ENCODE measurements at regions of chr12 and their contacts with region 1.

Region 1: DNA sequence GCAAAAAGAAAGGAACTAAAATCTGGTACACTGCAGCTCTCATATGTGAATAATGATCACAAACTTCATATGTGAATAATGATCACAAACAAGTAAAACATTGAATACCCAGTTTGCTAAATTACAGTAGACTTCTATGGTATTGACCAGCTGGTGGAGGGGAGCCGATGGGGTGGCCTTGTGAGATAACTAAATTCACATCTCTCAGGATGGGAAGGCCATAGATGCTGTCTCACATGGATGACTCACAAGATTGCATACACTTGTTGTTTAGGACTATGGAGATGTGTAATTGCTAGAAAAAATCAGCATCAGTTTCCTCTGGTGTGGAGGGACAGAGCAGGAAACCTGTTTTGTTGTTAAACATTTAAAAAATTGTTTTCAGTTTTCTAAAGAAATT is 49.2 kb downstream of the ACACB start:
- DNase-seq: peak in 6 of 7 donors; percentile 46 to 67 (median 59)
- H3K4me3 ChIP-seq: no peak overlapping the region
- H3K27ac ChIP-seq: peak overlapping the region in 3 of 5 donors; percentile 42 to 59 (median 46)
- H3K4me1 ChIP-seq: peaks cover 8 to 35% of the 10 kb centered on the region in 2 donors
- H3K27me3 ChIP-seq: no peaks in the 10 kb centered on the region
- CTCF ChIP-seq: no peak
- POLR2A ChIP-seq: no peak

Region 2: DNA sequence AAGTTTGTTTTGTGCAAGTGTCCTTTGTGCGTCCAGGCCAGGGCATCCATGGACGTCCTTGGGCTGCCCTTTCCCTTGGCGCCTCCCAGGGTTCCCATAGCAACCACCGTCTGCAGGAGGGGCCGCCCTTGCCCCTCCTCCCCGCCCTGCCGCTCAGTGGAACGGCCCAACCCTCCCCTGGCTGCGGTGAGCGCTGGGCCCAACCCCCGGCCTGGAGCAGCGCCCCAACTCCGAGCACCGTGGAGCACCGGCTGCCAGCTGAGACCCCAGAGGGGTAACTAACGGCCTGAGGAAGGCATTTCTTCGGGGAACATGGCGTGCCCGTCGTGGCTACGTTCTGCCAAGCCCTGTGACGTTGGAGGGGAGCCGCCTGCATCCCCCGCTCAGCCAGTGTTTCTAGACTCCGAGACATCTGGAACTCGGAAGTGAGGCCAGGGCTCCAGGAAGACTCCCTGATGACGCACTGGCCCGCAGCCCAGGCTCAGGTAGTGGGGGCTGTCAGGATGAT is 54.6 kb before region 1 on chr12:
- intact Hi-C with region 1: loop called in 1 of 2 experiments (anchors 10 kb)
- DNase-seq: peak; percentile 94 to 98 (median 95)
- H3K4me3 ChIP-seq: peak overlapping the region in 3 of 4 donors; percentile 23 to 70 (median 54)
- H3K27ac ChIP-seq: peak overlapping the region; percentile 86 to 99 (median 90)
- H3K4me1 ChIP-seq: peaks cover 50 to 52% of the 10 kb centered on the region in 2 donors
- H3K27me3 ChIP-seq: no peaks in the 10 kb centered on the region
- CTCF ChIP-seq: no peak
- POLR2A ChIP-seq: peak; percentile 75 to 83

Region 3: DNA sequence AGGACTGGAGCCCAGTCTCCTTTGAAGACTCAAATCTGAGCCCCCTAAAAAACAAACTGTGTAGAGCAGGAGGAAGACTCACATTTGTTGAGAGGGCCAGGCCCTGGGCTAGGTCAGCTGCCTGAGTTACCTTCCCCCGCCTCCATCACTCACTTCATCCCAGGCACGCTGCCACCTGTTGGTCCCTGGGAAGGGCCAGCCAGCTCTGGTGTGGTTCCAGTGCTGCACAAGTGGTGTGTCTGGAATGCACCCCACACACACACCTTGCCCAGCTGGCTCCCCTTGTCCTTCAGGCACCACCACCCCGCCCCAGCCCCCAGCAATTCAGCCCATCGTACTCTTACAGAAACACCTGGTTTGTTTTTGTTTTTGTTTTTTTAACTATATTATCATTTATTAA is 417.1 kb after region 1 on chr12:
- intact Hi-C with region 1: no loop called
- DNase-seq: no peak
- H3K4me3 ChIP-seq: no peak overlapping the region
- H3K27ac ChIP-seq: no peak overlapping the region
- H3K4me1 ChIP-seq: no peaks in the 10 kb centered on the region
- H3K27me3 ChIP-seq: no peaks in the 10 kb centered on the region
- CTCF ChIP-seq: no peak
- POLR2A ChIP-seq: no peak

Measured in adrenal gland (tissue), 19 donors.